ENCODE measurements at regions of chr15 and their contacts with region 1.

Region 1: DNA sequence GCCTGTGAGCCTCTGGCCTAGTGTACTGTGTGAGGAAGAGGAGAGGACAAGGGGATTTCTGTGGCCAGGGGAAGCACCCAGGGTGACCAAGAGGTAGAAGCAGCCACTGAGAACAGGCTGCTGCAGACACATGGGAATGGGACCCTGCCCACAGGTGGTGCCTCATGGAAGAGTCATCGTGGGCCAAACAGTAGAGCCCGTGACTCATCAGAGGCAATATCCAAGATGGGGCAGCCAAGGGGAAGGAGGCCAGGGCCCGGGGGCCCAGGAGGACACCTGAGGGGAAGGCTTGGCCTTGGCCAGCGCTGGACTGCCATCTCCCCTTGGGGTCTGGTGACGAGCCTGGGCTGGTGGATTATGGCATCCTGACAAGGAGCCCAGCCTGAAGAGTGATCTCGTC is 275.0 kb upstream of the LYSMD4 start:
- DNase-seq: no peak
- ATAC-seq: no peak
- H3K4me3 ChIP-seq: no peak overlapping the region
- H3K4me3 Mint-ChIP-seq: no peak overlapping the region
- H3K27ac ChIP-seq: no peak overlapping the region
- H3K27ac Mint-ChIP-seq: no peak overlapping the region
- H3K4me1 ChIP-seq: no peaks in the 10 kb centered on the region
- H3K4me1 Mint-ChIP-seq: no peaks in the 10 kb centered on the region
- H3K27me3 ChIP-seq: no peaks in the 10 kb centered on the region
- H3K27me3 Mint-ChIP-seq: no peaks in the 10 kb centered on the region
- CTCF ChIP-seq: no peak

Region 2: GRCh38 chr15:99181545-99181971 is 826.7 kb before region 1 on chr15:
- CTCF ChIA-PET with region 1: no interaction called
- POLR2A ChIA-PET with region 1: no interaction called
- intact Hi-C with region 1: loop called (anchors 10 kb)
- DNase-seq: no peak
- ATAC-seq: no peak
- H3K4me3 ChIP-seq: no peak overlapping the region
- H3K4me3 Mint-ChIP-seq: no peak overlapping the region
- H3K27ac ChIP-seq: no peak overlapping the region
- H3K27ac Mint-ChIP-seq: no peak overlapping the region
- H3K4me1 ChIP-seq: no peaks in the 10 kb centered on the region
- H3K4me1 Mint-ChIP-seq: no peaks in the 10 kb centered on the region
- H3K27me3 ChIP-seq: no peaks in the 10 kb centered on the region
- H3K27me3 Mint-ChIP-seq: no peaks in the 10 kb centered on the region
- CTCF ChIP-seq: no peak

Region 3: GRCh38 chr15:100043015-100043641 is 34.9 kb after region 1 on chr15:
- CTCF ChIA-PET with region 1: no interaction called
- POLR2A ChIA-PET with region 1: no interaction called
- intact Hi-C with region 1: no loop called
- DNase-seq: no peak
- ATAC-seq: no peak
- H3K4me3 ChIP-seq: no peak overlapping the region
- H3K4me3 Mint-ChIP-seq: no peak overlapping the region
- H3K27ac ChIP-seq: no peak overlapping the region
- H3K27ac Mint-ChIP-seq: no peak overlapping the region
- H3K4me1 ChIP-seq: no peaks in the 10 kb centered on the region
- H3K4me1 Mint-ChIP-seq: no peaks in the 10 kb centered on the region
- H3K27me3 ChIP-seq: no peaks in the 10 kb centered on the region
- H3K27me3 Mint-ChIP-seq: peaks cover 3% of the 10 kb centered on the region
- CTCF ChIP-seq: no peak